PC-3 (cell line): ENCODE measurements at regions of chr16 and their contacts with region 1.

Region 1: GRCh38 chr16:89700100-89700648 is 1.3 kb downstream of the SPATA2L start:
- DNase-seq: peak; percentile 98
- ATAC-seq: peak; percentile 59
- H3K4me3 ChIP-seq: peak overlapping the region; percentile 73
- H3K27ac ChIP-seq: peak overlapping the region; percentile 17; the same call in 1 of the 2 replicates
- H3K4me1 ChIP-seq: peaks cover 9% of the 10 kb centered on the region
- H3K27me3 ChIP-seq: no peaks in the 10 kb centered on the region
- CTCF ChIP-seq: peak; percentile 64

Region 2: DNA sequence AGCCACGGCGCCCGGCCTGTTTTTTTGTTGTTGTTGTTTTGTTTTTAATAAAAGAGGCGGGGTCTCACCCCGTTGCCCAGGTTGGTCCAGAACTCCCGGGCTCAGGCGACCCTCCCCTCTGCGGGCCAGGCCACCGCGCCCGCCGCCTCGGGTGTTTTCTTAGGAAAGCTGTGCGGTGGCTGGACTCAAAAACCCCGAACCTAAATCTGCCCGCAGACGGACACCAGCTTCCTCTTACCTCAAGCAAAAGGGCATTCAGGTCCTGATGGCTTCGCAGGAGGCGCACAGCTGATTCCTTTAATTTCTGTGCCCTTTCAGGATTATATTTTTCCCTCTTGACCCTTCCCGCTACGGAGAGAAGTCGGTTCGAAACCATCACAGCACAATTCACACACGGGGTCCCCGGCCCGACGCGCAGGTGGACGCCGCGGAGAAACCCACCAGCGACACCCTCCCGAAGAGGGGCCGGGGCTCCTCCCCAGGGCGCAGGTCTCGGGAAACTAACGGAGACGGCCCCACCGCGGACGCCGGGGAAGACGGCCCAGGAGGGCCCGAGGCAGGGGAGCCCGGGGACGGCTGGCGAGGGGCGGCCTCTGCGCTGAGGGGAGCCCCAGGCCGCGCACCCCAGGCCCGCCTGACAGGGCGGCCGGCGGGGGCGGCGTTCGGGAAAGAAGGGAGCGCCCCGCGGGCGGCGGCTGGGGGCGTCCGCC is 115.6 kb after region 1 on chr16:
- CTCF ChIA-PET with region 1: no interaction called
- POLR2A ChIA-PET with region 1: no interaction called
- intact Hi-C with region 1: loop called (anchors 10 kb)
- DNase-seq: peak; percentile 15
- ATAC-seq: peak; percentile 25
- H3K4me3 ChIP-seq: peak overlapping the region; percentile 89
- H3K27ac ChIP-seq: no peak overlapping the region
- H3K4me1 ChIP-seq: peaks cover 21% of the 10 kb centered on the region
- H3K27me3 ChIP-seq: no peaks in the 10 kb centered on the region
- CTCF ChIP-seq: no peak

Region 3: GRCh38 chr16:89873972-89874689 is 174.0 kb after region 1 on chr16:
- CTCF ChIA-PET with region 1: no interaction called
- POLR2A ChIA-PET with region 1: interaction called, 5 read pairs
- intact Hi-C with region 1: loop called (anchors 5 kb)
- DNase-seq: peak; percentile 89
- ATAC-seq: peak; percentile 75
- H3K4me3 ChIP-seq: peak overlapping the region; percentile 79
- H3K27ac ChIP-seq: peak overlapping the region; percentile 98
- H3K4me1 ChIP-seq: peaks cover 17% of the 10 kb centered on the region
- H3K27me3 ChIP-seq: no peaks in the 10 kb centered on the region
- CTCF ChIP-seq: no peak